AG04450 (cell line): ENCODE measurements at regions of chr19 and their contacts with region 1.

Region 1: DNA sequence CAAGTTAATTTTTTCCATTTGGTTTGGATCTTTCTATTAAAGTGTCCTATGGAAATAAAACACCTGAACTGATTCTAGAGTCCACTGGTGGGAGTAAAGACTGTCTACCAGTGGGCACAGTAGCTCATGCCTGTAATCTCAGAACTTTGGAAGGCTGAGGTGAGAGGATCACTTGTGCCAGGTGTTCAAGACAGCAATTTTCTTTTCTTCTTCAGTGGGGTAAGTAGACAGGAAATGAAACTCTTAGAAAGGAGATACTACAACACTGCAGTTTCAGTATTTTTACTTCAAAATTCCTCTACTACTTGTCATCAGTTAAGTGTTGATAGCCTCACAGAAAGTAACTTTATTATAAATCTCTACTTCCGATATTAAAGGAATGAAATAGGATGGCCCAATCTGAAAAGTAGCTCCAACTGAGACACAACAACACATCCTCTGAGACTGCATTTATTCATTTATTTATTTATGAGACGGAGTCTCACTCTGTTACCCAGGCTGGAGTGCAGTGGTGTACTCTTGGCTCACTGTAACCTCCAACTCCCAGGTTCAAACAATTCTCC is 26.3 kb downstream of the DNMT1 start:
- DNase-seq: no peak
- H3K4me3 ChIP-seq: no peak overlapping the region
- H3K27ac ChIP-seq: no peak overlapping the region
- H3K27me3 ChIP-seq: no peaks in the 10 kb centered on the region
- CTCF ChIP-seq: no peak

Region 2: GRCh38 chr19:10206226-10206885 is 37.9 kb after region 1 on chr19:
- CTCF ChIA-PET with region 1: no interaction called
- POLR2A ChIA-PET with region 1: no interaction called
- DNase-seq: no peak
- H3K4me3 ChIP-seq: no peak overlapping the region
- H3K27ac ChIP-seq: peak overlapping the region; percentile 39
- H3K27me3 ChIP-seq: no peaks in the 10 kb centered on the region
- CTCF ChIP-seq: no peak

Region 3: DNA sequence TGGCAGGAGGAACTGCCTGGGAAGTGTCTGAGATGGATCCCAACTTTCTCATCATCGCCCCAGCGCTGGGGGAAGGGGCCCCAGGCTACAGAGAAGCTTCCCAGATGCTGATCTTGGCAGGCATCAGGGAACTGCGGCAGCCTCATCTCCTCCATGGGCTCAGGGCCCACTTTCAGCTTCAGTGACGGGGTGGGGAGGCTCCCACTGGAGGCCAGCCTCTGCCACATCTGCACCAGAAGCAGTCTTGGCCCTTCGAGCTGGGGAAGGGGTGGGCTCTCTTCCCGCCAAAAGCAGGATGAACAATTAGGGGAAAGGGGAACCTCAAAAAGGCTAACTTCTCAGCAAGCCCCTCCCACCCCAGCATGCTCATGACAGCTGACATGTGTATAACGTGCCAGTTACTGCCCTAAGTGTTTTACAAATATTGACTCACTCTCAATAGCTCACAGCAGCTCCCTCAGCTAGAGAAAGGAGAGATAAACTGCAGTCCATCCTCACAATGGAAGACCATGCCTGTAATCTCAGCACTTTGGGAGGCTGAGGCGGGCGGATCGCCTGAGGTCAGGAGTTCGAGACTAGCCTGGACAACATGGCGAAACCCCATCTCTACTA is 69.8 kb after region 1 on chr19:
- CTCF ChIA-PET with region 1: no interaction called
- POLR2A ChIA-PET with region 1: interaction called, 10 read pairs
- DNase-seq: peak; percentile 91
- H3K4me3 ChIP-seq: no peak overlapping the region
- H3K27ac ChIP-seq: peak overlapping the region; percentile 87
- H3K27me3 ChIP-seq: no peaks in the 10 kb centered on the region
- CTCF ChIP-seq: no peak